PC-3 (cell line): ENCODE measurements at regions of chr2 and their contacts with region 1.

Region 1: DNA sequence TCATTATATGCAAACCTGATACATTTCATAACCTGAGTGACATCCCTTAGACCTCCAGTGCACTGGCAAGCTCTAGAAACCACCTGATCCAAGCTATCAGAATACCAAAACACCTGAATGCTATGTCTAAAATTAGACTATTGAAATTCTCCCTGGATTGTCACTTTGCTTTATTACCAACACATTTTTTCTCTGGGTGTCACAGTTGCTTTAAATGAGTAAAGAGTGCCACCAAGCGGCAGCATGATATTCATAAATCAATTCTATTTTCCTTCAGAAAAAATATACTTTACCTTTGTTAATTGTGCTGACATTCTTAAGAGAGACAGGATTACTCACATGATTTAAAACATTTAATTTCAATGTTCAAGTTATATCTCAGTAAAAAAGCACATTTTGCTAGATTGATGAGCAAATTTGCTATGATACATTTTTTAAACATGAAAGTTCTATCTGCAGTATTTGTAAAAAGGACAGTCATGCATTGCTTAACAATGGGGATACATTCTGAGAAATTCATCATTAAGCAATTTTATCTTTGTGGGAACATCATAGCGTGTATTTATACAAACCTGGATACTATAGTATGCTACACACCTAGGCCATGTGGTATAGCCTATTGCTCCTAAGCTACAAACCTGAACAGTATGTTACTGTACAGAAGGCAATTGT is 338.4 kb upstream of the SLC39A10 start:
- DNase-seq: peak; percentile 67
- ATAC-seq: peak; percentile 29
- H3K4me3 ChIP-seq: no peak overlapping the region
- H3K27ac ChIP-seq: peak overlapping the region; percentile 38
- H3K4me1 ChIP-seq: peaks cover 29% of the 10 kb centered on the region
- H3K27me3 ChIP-seq: no peaks in the 10 kb centered on the region
- CTCF ChIP-seq: peak; percentile 84

Region 2: DNA sequence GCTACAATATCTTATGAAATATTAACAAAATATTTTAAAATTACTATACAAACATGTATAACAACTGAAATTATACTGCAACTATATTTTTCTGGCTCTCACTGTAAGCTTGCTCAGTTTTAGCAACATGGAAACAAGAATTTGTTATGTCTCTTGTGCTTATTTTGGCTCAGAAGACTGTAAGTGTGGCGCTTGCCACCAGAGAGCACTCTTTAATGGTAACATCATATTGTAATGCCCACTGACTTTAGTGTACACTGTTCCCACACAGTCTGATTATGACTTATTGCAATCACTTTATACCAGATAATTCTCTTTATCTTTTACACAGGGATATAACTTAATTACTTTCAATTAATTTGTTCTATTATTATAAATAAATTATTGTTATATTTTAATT is 1623.2 kb before region 1 on chr2:
- CTCF ChIA-PET with region 1: no interaction called
- POLR2A ChIA-PET with region 1: no interaction called
- intact Hi-C with region 1: loop called (anchors 5 kb)
- DNase-seq: peak; percentile 56
- ATAC-seq: peak; percentile 91
- H3K4me3 ChIP-seq: no peak overlapping the region
- H3K27ac ChIP-seq: no peak overlapping the region
- H3K4me1 ChIP-seq: no peaks in the 10 kb centered on the region
- H3K27me3 ChIP-seq: no peaks in the 10 kb centered on the region
- CTCF ChIP-seq: peak; percentile 61

Region 3: DNA sequence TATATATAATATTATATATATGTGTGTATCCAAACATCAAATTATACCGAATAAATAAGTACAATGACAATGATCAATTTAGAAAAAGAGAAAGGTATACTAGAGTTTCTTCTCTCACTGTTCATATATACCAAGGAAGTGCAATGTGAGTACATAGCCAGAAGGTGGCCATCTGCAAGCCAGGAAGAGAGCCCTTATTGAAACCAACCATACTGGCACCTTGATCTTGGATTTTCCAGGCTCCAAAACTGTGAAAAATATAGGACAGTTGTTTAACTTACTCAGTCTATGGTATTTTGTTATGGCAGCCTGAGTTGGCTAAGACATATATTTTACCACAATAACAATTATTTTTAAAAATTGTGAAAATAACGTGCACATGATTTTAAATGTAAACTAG is 1151.8 kb before region 1 on chr2:
- CTCF ChIA-PET with region 1: no interaction called
- POLR2A ChIA-PET with region 1: no interaction called
- intact Hi-C with region 1: loop called (anchors 1 kb)
- DNase-seq: peak; percentile 53
- ATAC-seq: peak; percentile 64
- H3K4me3 ChIP-seq: no peak overlapping the region
- H3K27ac ChIP-seq: no peak overlapping the region
- H3K4me1 ChIP-seq: no peaks in the 10 kb centered on the region
- H3K27me3 ChIP-seq: no peaks in the 10 kb centered on the region
- CTCF ChIP-seq: peak; percentile 59

Region 4: GRCh38 chr2:194819344-194819743 is 499.2 kb before region 1 on chr2:
- CTCF ChIA-PET with region 1: no interaction called
- POLR2A ChIA-PET with region 1: no interaction called
- intact Hi-C with region 1: loop called (anchors 5 kb)
- DNase-seq: peak; percentile 32
- ATAC-seq: peak; percentile 38; the same call in 1 of the 2 replicates
- H3K4me3 ChIP-seq: no peak overlapping the region
- H3K27ac ChIP-seq: no peak overlapping the region
- H3K4me1 ChIP-seq: no peaks in the 10 kb centered on the region; the same call in 1 of the 2 replicates
- H3K27me3 ChIP-seq: no peaks in the 10 kb centered on the region
- CTCF ChIP-seq: peak; percentile 56

Region 5: GRCh38 chr2:194992648-194993047 is 325.9 kb before region 1 on chr2:
- CTCF ChIA-PET with region 1: no interaction called
- POLR2A ChIA-PET with region 1: no interaction called
- intact Hi-C with region 1: no loop called
- DNase-seq: no peak
- ATAC-seq: no peak
- H3K4me3 ChIP-seq: no peak overlapping the region
- H3K27ac ChIP-seq: no peak overlapping the region
- H3K4me1 ChIP-seq: no peaks in the 10 kb centered on the region
- H3K27me3 ChIP-seq: no peaks in the 10 kb centered on the region
- CTCF ChIP-seq: no peak

Region 6: GRCh38 chr2:195642027-195642676 is 323.6 kb after region 1 on chr2:
- CTCF ChIA-PET with region 1: no interaction called
- POLR2A ChIA-PET with region 1: no interaction called
- intact Hi-C with region 1: no loop called
- DNase-seq: no peak
- ATAC-seq: no peak
- H3K4me3 ChIP-seq: no peak overlapping the region
- H3K27ac ChIP-seq: no peak overlapping the region
- H3K4me1 ChIP-seq: no peaks in the 10 kb centered on the region
- H3K27me3 ChIP-seq: no peaks in the 10 kb centered on the region
- CTCF ChIP-seq: no peak

Region 7: GRCh38 chr2:195656859-195657633 is 338.5 kb after region 1 on chr2 and contains the start of gene SLC39A10:
- CTCF ChIA-PET with region 1: interaction called, 6 read pairs
- POLR2A ChIA-PET with region 1: no interaction called
- intact Hi-C with region 1: loop called (anchors 1 kb)
- DNase-seq: peak; percentile 99
- ATAC-seq: peak; percentile 79
- H3K4me3 ChIP-seq: peak within 1 kb of the TSS; percentile 88
- H3K27ac ChIP-seq: peak within 1 kb of the TSS; percentile 78
- H3K4me1 ChIP-seq: peaks cover 25% of the 10 kb centered on the region
- H3K27me3 ChIP-seq: no peaks in the 10 kb centered on the region
- CTCF ChIP-seq: no peak
- total RNA-seq, gene SLC39A10: 18.6 and 19.9 TPM in 2 replicates